Activated B cell treated with CpG ODN at 0.5 μM for 24 hours (primary cell): ENCODE measurements at regions of chr22 and their contacts with region 1.

Region 1: GRCh38 chr22:41468381-41469217 is at the starts of genes ACO2 and PHF5A:
- DNase-seq: peak; percentile 98
- ATAC-seq: peak; percentile 90
- H3K4me3 Mint-ChIP-seq: peak within 1 kb of the TSS; percentile 88
- H3K27ac Mint-ChIP-seq: peak within 1 kb of the TSS; percentile 99
- H3K4me1 Mint-ChIP-seq: peaks cover 53% of the 10 kb centered on the region
- H3K27me3 Mint-ChIP-seq: no peaks in the 10 kb centered on the region
- CTCF ChIP-seq: no peak
- total RNA-seq, gene ACO2: 152 and 153 TPM in 2 replicates
- total RNA-seq, gene PHF5A: 47.4 and 54.0 TPM in 2 replicates

Region 2: DNA sequence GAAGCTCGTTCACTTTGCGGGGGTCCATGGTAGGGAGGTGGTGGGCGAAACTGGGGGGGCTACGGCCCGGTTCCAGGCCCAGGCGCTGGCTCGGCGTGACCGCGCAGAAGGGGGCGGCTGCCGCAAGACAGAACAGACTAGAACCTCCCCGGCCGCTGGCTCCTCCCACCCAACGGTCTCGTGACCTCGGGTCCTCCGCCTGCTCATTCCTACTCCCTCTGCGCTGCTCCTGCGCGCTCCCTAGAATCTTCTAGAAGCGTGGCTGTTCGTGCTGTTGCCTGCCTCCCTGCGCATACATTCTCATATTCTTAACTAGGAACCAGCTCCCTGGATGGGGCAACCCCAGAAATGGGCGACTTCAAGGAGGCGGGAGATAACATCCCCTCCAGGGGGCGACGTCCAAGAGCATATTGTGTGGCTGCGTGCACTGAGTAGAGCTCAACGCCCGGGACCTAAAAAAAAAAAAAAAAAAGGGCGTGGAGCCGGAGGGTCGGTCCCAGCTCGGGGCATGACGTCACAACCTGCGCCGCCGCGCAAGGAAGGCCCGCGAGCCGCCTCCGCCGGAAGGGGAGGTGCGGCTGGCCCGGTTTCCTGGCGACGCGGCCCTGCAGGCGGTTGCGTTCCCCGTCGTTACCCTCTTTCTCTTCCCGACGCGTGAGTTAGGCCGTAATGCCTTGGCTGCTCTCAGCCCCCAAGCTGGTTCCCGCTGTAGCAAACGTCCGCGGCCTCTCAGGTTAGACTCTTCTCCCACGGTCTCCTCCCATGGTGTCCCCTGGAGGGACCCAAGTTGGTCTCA is 611.9 kb before region 1 on chr22 and contains the starts of genes ST13 and XPNPEP3:
- CTCF ChIA-PET with region 1: no interaction called
- POLR2A ChIA-PET with region 1: interaction called, 3 read pairs
- intact Hi-C with region 1: loop called (anchors 2 kb)
- DNase-seq: peak; percentile 96
- ATAC-seq: peak; percentile 90
- H3K4me3 Mint-ChIP-seq: peak within 1 kb of the TSS; percentile 98
- H3K27ac Mint-ChIP-seq: peak within 1 kb of the TSS; percentile 100
- H3K4me1 Mint-ChIP-seq: peaks cover 47% of the 10 kb centered on the region
- H3K27me3 Mint-ChIP-seq: no peaks in the 10 kb centered on the region
- CTCF ChIP-seq: no peak
- total RNA-seq, gene ST13: 183 and 221 TPM in 2 replicates
- total RNA-seq, gene XPNPEP3: 20.3 and 20.8 TPM in 2 replicates

Region 3: DNA sequence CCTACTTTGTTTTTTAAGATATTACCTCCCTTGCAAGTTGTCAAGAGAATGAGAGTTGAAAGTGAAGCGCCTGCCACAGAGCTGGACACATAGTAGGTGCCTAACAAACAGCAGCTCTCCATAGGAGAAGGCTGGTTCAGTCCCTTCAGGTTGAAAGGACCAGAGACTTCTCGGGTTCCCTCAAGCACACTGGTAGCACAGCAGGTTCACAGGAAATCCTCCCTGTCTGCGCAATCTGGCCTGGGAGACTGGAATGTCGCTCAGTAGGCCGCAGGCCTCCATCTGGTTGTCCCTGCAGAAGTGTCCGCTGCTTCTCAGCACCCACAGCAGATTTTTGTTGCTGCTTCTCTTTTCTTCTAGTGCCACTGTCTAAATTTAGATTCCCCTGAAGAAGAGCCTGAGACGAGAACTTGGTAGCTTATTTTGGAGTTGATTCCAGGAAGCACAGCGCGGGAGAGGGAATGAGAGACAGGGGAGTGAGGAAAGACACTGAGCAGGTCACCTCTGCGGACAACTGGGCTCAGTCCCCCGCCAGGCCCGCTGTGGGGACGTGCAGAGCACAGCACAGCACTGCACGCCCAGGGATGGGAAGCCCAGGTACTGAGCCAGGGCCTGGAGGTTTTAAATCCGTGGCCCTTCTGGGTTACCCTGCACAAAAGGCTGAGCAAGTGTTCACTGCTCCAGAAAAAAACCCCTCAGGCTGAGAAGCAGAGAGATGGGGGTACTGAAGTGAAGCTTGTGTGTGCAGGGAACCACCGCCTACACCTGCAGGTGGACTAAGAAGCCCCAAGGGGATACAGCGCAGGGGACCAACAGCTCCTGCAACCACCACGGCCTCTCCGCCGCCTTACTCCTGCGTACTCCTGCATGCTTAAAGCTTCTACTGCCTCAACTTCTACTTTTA is 485.9 kb before region 1 on chr22:
- CTCF ChIA-PET with region 1: no interaction called
- POLR2A ChIA-PET with region 1: no interaction called
- intact Hi-C with region 1: no loop called
- DNase-seq: peak; percentile 31
- ATAC-seq: peak; percentile 99
- H3K4me3 Mint-ChIP-seq: peak overlapping the region; percentile 50
- H3K27ac Mint-ChIP-seq: no peak overlapping the region
- H3K4me1 Mint-ChIP-seq: peaks cover 16% of the 10 kb centered on the region
- H3K27me3 Mint-ChIP-seq: no peaks in the 10 kb centered on the region
- CTCF ChIP-seq: no peak

Region 4: GRCh38 chr22:41285820-41286638 is 182.6 kb before region 1 on chr22 and contains the start of gene RANGAP1:
- CTCF ChIA-PET with region 1: no interaction called
- POLR2A ChIA-PET with region 1: interaction called, 3 read pairs
- intact Hi-C with region 1: loop called (anchors 1 kb)
- DNase-seq: peak; percentile 93
- ATAC-seq: peak; percentile 97
- H3K4me3 Mint-ChIP-seq: peak within 1 kb of the TSS; percentile 94
- H3K27ac Mint-ChIP-seq: peak within 1 kb of the TSS; percentile 98
- H3K4me1 Mint-ChIP-seq: peaks cover 28% of the 10 kb centered on the region
- H3K27me3 Mint-ChIP-seq: no peaks in the 10 kb centered on the region
- CTCF ChIP-seq: no peak
- total RNA-seq, gene RANGAP1: 48.9 and 56.4 TPM in 2 replicates

Region 5: DNA sequence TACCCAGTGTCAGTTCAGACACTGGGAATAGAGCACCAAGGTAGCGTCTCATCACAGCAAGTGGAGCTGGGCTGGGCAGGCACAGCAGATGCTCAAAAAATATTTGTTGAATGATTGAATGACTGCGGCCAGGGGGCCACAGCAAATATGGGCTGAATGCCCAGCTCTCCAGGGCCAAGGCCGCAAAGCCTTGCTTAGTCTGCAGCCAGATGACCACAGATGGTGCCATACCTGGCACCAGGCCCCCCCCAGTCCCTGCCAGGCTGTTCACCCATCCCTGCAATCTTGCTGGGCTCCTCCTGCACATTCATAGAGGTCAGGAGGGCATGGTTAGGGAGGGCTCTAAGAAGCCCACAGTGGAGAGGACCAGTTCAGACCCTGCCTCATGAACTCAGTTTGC is 134.4 kb before region 1 on chr22:
- CTCF ChIA-PET with region 1: no interaction called
- POLR2A ChIA-PET with region 1: no interaction called
- intact Hi-C with region 1: no loop called
- DNase-seq: no peak
- ATAC-seq: no peak
- H3K4me3 Mint-ChIP-seq: no peak overlapping the region
- H3K27ac Mint-ChIP-seq: no peak overlapping the region
- H3K4me1 Mint-ChIP-seq: no peaks in the 10 kb centered on the region
- H3K27me3 Mint-ChIP-seq: no peaks in the 10 kb centered on the region
- CTCF ChIP-seq: no peak

Region 6: GRCh38 chr22:41403532-41404318 is 64.9 kb before region 1 on chr22:
- CTCF ChIA-PET with region 1: interaction called, 26 read pairs
- POLR2A ChIA-PET with region 1: interaction called, 15 read pairs
- intact Hi-C with region 1: no loop called
- DNase-seq: peak; percentile 69
- ATAC-seq: peak; percentile 87
- H3K4me3 Mint-ChIP-seq: no peak overlapping the region
- H3K27ac Mint-ChIP-seq: peak overlapping the region; percentile 20
- H3K4me1 Mint-ChIP-seq: peaks cover 37% of the 10 kb centered on the region
- H3K27me3 Mint-ChIP-seq: no peaks in the 10 kb centered on the region
- CTCF ChIP-seq: peak; percentile 33

Region 7: GRCh38 chr22:41458161-41458728 is 10.4 kb before region 1 on chr22:
- CTCF ChIA-PET with region 1: no interaction called
- POLR2A ChIA-PET with region 1: interaction called, 16 read pairs
- intact Hi-C with region 1: no loop called
- DNase-seq: no peak
- ATAC-seq: no peak
- H3K4me3 Mint-ChIP-seq: no peak overlapping the region
- H3K27ac Mint-ChIP-seq: peak overlapping the region; percentile 53
- H3K4me1 Mint-ChIP-seq: peaks cover 4% of the 10 kb centered on the region
- H3K27me3 Mint-ChIP-seq: no peaks in the 10 kb centered on the region
- CTCF ChIP-seq: no peak

Region 8: DNA sequence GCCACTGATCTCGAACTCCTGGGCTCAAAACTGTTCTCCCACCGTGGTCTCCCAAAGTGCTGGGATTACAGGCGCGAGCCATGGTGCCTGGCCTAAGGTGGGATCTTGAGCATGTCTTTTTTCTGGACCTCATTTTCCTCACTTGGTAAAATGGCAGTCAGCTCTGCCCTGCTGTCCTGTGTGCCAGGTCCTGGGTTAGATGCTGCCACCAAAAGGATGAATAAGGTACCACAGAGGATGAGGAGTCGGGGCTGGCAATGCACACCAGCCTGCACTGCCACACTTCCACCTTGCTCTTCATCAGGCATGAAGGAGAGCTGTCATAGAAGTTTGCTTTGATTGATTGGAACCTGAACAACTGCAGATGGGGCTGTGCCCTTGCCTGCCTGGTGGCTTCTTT is 32.6 kb after region 1 on chr22:
- CTCF ChIA-PET with region 1: interaction called, 28 read pairs
- POLR2A ChIA-PET with region 1: interaction called, 43 read pairs
- intact Hi-C with region 1: loop called (anchors 1 kb)
- DNase-seq: no peak
- ATAC-seq: peak; percentile 88
- H3K4me3 Mint-ChIP-seq: no peak overlapping the region
- H3K27ac Mint-ChIP-seq: peak overlapping the region; percentile 83
- H3K4me1 Mint-ChIP-seq: peaks cover 47% of the 10 kb centered on the region
- H3K27me3 Mint-ChIP-seq: no peaks in the 10 kb centered on the region
- CTCF ChIP-seq: no peak

Region 9: DNA sequence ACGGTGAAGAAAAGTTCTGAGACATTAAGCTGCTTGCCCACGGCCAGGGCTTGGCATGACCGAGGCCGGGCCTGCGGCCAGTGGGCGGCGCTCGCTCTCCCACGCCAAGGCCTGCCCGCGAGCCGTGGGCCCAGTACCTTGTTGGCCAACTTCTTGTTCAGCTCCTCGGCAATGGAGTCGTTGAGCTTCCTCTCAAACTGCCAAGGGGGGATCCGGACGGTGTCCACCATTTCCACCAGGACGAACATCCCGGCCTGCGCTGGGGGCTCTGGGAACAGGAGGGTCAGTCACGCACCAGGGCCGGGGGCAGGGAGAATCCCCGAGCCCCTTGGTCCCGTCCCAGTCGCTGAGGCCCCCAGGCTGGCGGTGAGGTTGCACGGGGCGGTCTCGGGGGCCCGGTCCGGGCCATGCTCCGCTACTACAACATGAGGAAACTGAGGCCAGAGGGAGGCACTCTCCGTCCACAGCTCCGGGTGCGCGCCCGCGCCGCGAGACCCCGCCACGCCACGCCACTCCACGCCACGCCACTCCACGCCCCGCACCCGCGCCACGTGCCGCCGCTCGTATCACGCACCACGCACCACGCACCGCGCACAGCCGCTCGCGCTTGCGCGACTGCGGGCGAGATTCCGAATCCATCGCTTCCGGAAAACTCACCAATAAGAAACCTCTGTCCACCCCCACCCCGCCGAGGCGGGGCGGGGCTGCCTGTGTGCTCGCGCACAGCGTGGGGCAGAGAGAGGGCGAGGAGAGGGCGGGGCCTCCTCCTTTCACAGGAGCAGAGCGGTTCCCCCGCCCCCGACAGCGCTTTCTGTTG is 75.5 kb after region 1 on chr22 and contains the start of gene POLR3H:
- CTCF ChIA-PET with region 1: no interaction called
- POLR2A ChIA-PET with region 1: interaction called, 13 read pairs
- intact Hi-C with region 1: loop called (anchors 1 kb)
- DNase-seq: peak; percentile 93
- ATAC-seq: peak; percentile 99
- H3K4me3 Mint-ChIP-seq: peak within 1 kb of the TSS; percentile 96
- H3K27ac Mint-ChIP-seq: peak within 1 kb of the TSS; percentile 86
- H3K4me1 Mint-ChIP-seq: peaks cover 43% of the 10 kb centered on the region
- H3K27me3 Mint-ChIP-seq: no peaks in the 10 kb centered on the region
- CTCF ChIP-seq: no peak
- total RNA-seq, gene POLR3H: 39.0 and 43.9 TPM in 2 replicates